Posterior cingulate gyrus (tissue), 11 donors: ENCODE measurements at regions of chr14 and their contacts with region 1.

Region 1: GRCh38 chr14:52068615-52069303 is at the start of gene NID2:
- DNase-seq: peak; percentile 50 to 95 (median 66)

Region 2: DNA sequence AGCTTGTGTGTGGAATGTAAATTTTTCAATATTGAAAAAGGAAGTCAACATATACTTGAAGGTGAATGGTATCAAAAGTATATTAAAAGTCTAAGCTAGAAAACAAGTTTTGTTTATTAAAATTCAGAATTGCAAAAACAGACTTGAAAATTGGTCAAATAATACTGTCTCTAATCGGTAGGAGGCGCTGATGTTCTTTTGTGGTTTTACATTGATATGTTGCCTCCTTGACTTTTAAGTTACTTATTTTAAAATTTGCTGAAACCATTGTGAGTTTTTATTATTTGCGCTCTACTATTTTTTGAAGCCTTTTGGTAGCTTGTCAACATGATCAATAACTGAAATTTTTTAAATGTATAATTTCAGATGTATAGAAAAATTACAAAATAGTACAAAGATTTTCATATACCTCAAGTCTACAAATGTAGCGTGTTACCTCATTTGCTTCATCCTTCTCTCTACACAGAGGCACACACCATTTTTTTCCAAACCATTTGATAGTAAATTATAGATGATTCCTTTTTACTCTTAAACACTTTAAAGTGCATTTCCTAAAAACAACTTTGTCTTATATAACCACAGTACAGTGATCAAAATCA is 72.5 kb before region 1 on chr14:
- intact Hi-C with region 1: loop called (anchors 5 kb)
- DNase-seq: no peak

Region 3: GRCh38 chr14:52013984-52014600 is 54.7 kb before region 1 on chr14:
- intact Hi-C with region 1: loop called (anchors 5 kb)
- DNase-seq: peak in 5 of 10 donors; percentile 24 to 89 (median 61)